Activated CD4-positive, alpha-beta T cell treated with anti-CD3 and anti-CD28 coated beads for 36 hours (primary cell): ENCODE measurements at regions of chr14 and their contacts with region 1.

Region 1: GRCh38 chr14:24605435-24606190 is 3.9 kb downstream of the GZMH start:
- DNase-seq: peak; percentile 83
- ATAC-seq: peak; percentile 87
- H3K4me3 Mint-ChIP-seq: peak overlapping the region; percentile 66
- H3K27ac Mint-ChIP-seq: peak overlapping the region; percentile 87
- H3K4me1 Mint-ChIP-seq: peaks cover 40% of the 10 kb centered on the region
- H3K27me3 Mint-ChIP-seq: no peaks in the 10 kb centered on the region

Region 2: GRCh38 chr14:24188251-24189058 is 417.2 kb before region 1 on chr14 and contains the start of gene IPO4:
- CTCF ChIA-PET with region 1: no interaction called
- POLR2A ChIA-PET with region 1: no interaction called
- intact Hi-C with region 1: no loop called
- DNase-seq: peak; percentile 97
- ATAC-seq: peak; percentile 92
- H3K4me3 Mint-ChIP-seq: peak within 1 kb of the TSS; percentile 89
- H3K27ac Mint-ChIP-seq: peak within 1 kb of the TSS; percentile 83
- H3K4me1 Mint-ChIP-seq: peaks cover 40% of the 10 kb centered on the region
- H3K27me3 Mint-ChIP-seq: no peaks in the 10 kb centered on the region
- total RNA-seq, gene IPO4: 73.4 to 73.7 TPM

Region 3: GRCh38 chr14:24481622-24482324 is 123.8 kb before region 1 on chr14:
- CTCF ChIA-PET with region 1: interaction called, 5 read pairs
- POLR2A ChIA-PET with region 1: no interaction called
- intact Hi-C with region 1: loop called (anchors 5 kb)
- DNase-seq: peak; percentile 77
- ATAC-seq: peak; percentile 90
- H3K4me3 Mint-ChIP-seq: peak overlapping the region; percentile 52
- H3K27ac Mint-ChIP-seq: peak overlapping the region; percentile 70
- H3K4me1 Mint-ChIP-seq: peaks cover 17% of the 10 kb centered on the region
- H3K27me3 Mint-ChIP-seq: no peaks in the 10 kb centered on the region

Region 4: GRCh38 chr14:24678801-24679247 is 73.2 kb after region 1 on chr14:
- CTCF ChIA-PET with region 1: interaction called, 17 read pairs
- POLR2A ChIA-PET with region 1: no interaction called
- intact Hi-C with region 1: loop called (anchors 1 kb)
- DNase-seq: peak; percentile 87
- ATAC-seq: peak; percentile 66
- H3K4me3 Mint-ChIP-seq: peak overlapping the region; percentile 69
- H3K27ac Mint-ChIP-seq: peak overlapping the region; percentile 95
- H3K4me1 Mint-ChIP-seq: peaks cover 61% of the 10 kb centered on the region
- H3K27me3 Mint-ChIP-seq: peaks cover 4% of the 10 kb centered on the region